Right cardiac atrium (tissue), 5 donors: ENCODE measurements at regions of chr12 and their contacts with region 1.

Region 1: GRCh38 chr12:27142101-27142721 is 59.8 kb upstream of the C12orf71 start:
- DNase-seq: peak in 2 of 3 donors; percentile 46 to 58
- ATAC-seq: peak; percentile 90 to 93
- H3K4me3 ChIP-seq: no peak overlapping the region
- H3K27ac ChIP-seq: no peak overlapping the region
- H3K4me1 ChIP-seq: no peaks in the 10 kb centered on the region
- H3K27me3 ChIP-seq: no peaks in the 10 kb centered on the region

Region 2: GRCh38 chr12:26937875-26938700 is 204.1 kb before region 1 on chr12 and contains the starts of genes FGFR1OP2 and INTS13:
- intact Hi-C with region 1: no loop called
- DNase-seq: peak; percentile 99 to 100 (median 100)
- ATAC-seq: peak; percentile 99
- H3K4me3 ChIP-seq: peak within 1 kb of the TSS; percentile 79
- H3K27ac ChIP-seq: peak within 1 kb of the TSS; percentile 90
- H3K4me1 ChIP-seq: peaks cover 4% of the 10 kb centered on the region
- H3K27me3 ChIP-seq: no peaks in the 10 kb centered on the region
- total RNA-seq, gene FGFR1OP2: 37.9 to 43.7 (median 39.9) TPM
- total RNA-seq, gene INTS13: 14.7 to 19.8 (median 15.4) TPM

Region 3: DNA sequence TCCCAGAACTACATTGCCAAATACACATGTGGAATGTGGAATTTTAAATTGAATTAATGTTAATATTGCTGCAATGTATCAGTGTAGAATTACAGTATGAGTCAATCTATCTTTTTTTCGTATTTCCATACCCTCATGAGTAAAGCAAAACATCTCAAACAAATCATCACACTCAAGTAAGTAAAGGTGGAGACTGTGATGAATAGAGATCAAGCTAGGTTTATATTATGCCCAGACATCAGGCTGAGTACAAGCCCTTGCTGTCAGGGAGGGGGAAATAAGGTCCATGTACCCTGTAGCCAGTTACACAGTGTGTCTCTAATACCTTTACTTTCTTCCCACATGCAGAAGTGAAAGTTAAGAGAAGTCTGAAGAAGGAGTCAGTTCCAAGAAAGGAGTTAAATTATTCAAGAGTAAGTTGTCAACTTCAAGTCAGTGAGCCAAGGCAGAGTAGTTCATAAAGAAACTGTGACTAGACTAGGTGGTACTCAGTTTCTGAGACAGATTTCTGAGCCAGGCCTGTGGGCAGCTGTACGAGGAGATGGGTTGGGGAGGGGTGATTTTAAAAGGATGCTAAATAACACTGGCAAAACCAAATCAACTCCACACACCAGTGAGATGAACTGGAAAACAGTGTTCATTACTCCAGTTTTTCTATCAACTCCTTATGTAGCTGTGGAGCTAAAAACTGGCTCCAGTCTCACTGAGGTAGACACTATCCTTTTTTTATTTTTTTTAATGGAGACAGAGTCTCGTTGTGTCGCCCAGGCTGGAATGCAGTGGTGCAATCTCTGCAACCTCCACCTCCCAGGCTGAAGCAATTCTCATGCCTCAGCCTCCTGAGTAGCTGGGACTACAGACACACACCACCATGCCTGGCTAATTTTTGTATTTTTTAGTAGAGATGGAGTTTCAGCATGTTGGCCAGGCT is 78.1 kb after region 1 on chr12:
- intact Hi-C with region 1: loop called in 1 of 4 experiments (anchors 10 kb)
- DNase-seq: no peak
- ATAC-seq: no peak
- H3K4me3 ChIP-seq: no peak overlapping the region
- H3K27ac ChIP-seq: no peak overlapping the region
- H3K4me1 ChIP-seq: no peaks in the 10 kb centered on the region
- H3K27me3 ChIP-seq: no peaks in the 10 kb centered on the region

Region 4: GRCh38 chr12:27293463-27293862 is 151.3 kb after region 1 on chr12:
- intact Hi-C with region 1: loop called in 2 of 4 experiments (anchors 10 kb)
- DNase-seq: peak in 1 of 3 donors; percentile 49
- ATAC-seq: no peak
- H3K4me3 ChIP-seq: no peak overlapping the region
- H3K27ac ChIP-seq: no peak overlapping the region
- H3K4me1 ChIP-seq: peaks cover 10% of the 10 kb centered on the region
- H3K27me3 ChIP-seq: no peaks in the 10 kb centered on the region